ENCODE measurements at regions of chr6 and their contacts with region 1.

Region 1: GRCh38 chr6:118283766-118284165 is 264.3 kb upstream of the PLN start:
- DNase-seq: peak; percentile 43
- H3K4me3 ChIP-seq: no peak overlapping the region
- H3K27ac ChIP-seq: no peak overlapping the region
- H3K27me3 ChIP-seq: peaks cover 2% of the 10 kb centered on the region
- CTCF ChIP-seq: peak; percentile 87

Region 2: GRCh38 chr6:118485601-118486550 is 202.1 kb after region 1 on chr6:
- CTCF ChIA-PET with region 1: interaction called, 11 read pairs
- POLR2A ChIA-PET with region 1: no interaction called
- DNase-seq: no peak
- H3K4me3 ChIP-seq: no peak overlapping the region
- H3K27ac ChIP-seq: no peak overlapping the region
- H3K27me3 ChIP-seq: no peaks in the 10 kb centered on the region
- CTCF ChIP-seq: no peak

Region 3: DNA sequence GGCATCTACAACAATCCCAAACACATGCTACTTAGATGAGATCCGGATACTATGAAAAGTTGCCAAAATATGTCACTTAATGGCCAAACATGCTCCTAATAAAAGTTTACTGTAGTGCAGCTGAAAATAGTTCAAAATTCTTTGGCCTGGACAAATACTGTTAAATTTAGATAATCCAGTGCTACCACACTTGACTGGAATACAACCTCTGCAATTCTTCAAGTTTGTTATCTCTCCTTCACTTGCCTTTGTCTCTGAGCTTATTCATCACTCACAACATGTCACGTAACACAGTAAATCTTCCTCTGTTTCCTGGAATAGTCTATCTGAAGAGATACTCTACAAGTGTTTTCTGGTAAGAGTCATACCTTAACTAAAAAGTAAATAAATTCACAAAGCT is 253.8 kb after region 1 on chr6:
- CTCF ChIA-PET with region 1: interaction called, 21 read pairs
- POLR2A ChIA-PET with region 1: no interaction called
- DNase-seq: no peak
- H3K4me3 ChIP-seq: no peak overlapping the region
- H3K27ac ChIP-seq: no peak overlapping the region
- H3K27me3 ChIP-seq: no peaks in the 10 kb centered on the region
- CTCF ChIP-seq: no peak

Region 4: GRCh38 chr6:118565311-118565960 is 281.7 kb after region 1 on chr6:
- CTCF ChIA-PET with region 1: interaction called, 17 read pairs
- POLR2A ChIA-PET with region 1: no interaction called
- DNase-seq: no peak
- H3K4me3 ChIP-seq: no peak overlapping the region
- H3K27ac ChIP-seq: no peak overlapping the region
- H3K27me3 ChIP-seq: no peaks in the 10 kb centered on the region
- CTCF ChIP-seq: peak; percentile 49

Region 5: GRCh38 chr6:118776607-118777549 is 493.1 kb after region 1 on chr6:
- CTCF ChIA-PET with region 1: interaction called, 11 read pairs
- POLR2A ChIA-PET with region 1: no interaction called
- DNase-seq: peak; percentile 34
- H3K4me3 ChIP-seq: no peak overlapping the region
- H3K27ac ChIP-seq: no peak overlapping the region
- H3K27me3 ChIP-seq: peaks cover 4% of the 10 kb centered on the region
- CTCF ChIP-seq: peak; percentile 81

Measured in AG04450 (cell line).